Activated B cell treated with CpG ODN at 0.5 μM for 24 hours (primary cell): ENCODE measurements at regions of chr20 and their contacts with region 1.

Region 1: GRCh38 chr20:48864791-48865314 is 37.1 kb upstream of the PREX1 start:
- DNase-seq: no peak
- ATAC-seq: peak; percentile 14
- H3K4me3 Mint-ChIP-seq: peak overlapping the region; percentile 9
- H3K27ac Mint-ChIP-seq: no peak overlapping the region
- H3K4me1 Mint-ChIP-seq: peaks cover 45% of the 10 kb centered on the region
- H3K27me3 Mint-ChIP-seq: no peaks in the 10 kb centered on the region
- CTCF ChIP-seq: no peak

Region 2: DNA sequence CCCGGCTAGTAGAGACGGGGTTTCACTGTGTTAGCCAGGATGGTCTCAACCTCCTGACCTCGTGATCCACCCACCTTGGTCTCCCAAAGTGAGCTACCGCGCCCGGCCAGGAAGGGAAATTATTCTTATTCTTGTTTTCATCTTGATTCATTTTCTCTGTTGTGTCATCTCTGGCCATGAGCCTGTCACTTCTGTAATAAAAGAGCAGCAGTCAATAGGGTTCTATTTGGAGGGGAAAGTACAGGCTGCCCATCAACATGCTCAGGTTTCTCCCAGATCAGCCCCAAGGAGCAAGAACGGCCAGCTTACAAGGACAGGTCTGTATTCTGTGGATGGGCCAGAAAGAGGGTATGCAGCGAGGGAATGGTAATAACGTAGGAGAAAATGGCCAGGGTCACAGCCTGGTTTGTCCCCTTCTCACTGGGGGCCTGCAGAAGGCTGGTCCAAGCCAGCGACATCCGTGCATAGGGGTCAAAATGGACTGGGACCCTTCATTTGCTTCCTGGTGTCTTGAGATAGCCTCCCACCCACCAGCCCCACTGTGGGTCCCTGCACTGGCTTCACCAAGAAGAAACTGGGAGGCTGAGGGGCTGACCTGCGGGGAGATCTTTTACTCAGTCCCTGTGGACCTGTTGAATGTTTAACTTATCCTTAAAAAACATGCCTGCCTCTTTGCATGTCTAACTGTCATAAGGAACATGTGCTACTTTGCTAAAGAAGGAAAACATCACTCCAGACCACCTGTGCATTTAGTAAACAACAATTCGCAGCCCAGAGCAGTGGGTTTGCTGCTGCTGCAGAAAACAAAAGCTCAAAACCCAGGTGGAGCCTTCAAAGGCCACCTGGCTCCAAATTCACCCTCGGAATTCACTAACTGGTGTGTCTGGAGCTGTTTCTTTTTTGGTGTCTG is 381.8 kb before region 1 on chr20:
- CTCF ChIA-PET with region 1: no interaction called
- POLR2A ChIA-PET with region 1: no interaction called
- intact Hi-C with region 1: no loop called
- DNase-seq: no peak
- ATAC-seq: no peak
- H3K4me3 Mint-ChIP-seq: no peak overlapping the region
- H3K27ac Mint-ChIP-seq: no peak overlapping the region
- H3K4me1 Mint-ChIP-seq: peaks cover 2% of the 10 kb centered on the region
- H3K27me3 Mint-ChIP-seq: peaks cover 47% of the 10 kb centered on the region
- CTCF ChIP-seq: no peak

Region 3: GRCh38 chr20:48620519-48621254 is 244.2 kb before region 1 on chr20:
- CTCF ChIA-PET with region 1: no interaction called
- POLR2A ChIA-PET with region 1: no interaction called
- intact Hi-C with region 1: no loop called
- DNase-seq: peak; percentile 70
- ATAC-seq: peak; percentile 95
- H3K4me3 Mint-ChIP-seq: peak overlapping the region; percentile 50
- H3K27ac Mint-ChIP-seq: no peak overlapping the region
- H3K4me1 Mint-ChIP-seq: peaks cover 10% of the 10 kb centered on the region
- H3K27me3 Mint-ChIP-seq: no peaks in the 10 kb centered on the region
- CTCF ChIP-seq: peak; percentile 51

Region 4: GRCh38 chr20:48904365-48905296 is 39.8 kb after region 1 on chr20:
- CTCF ChIA-PET with region 1: no interaction called
- POLR2A ChIA-PET with region 1: no interaction called
- intact Hi-C with region 1: loop called (anchors 5 kb)
- DNase-seq: no peak
- ATAC-seq: peak; percentile 83
- H3K4me3 Mint-ChIP-seq: peak overlapping the region; percentile 45
- H3K27ac Mint-ChIP-seq: peak overlapping the region; percentile 30
- H3K4me1 Mint-ChIP-seq: peaks cover 10% of the 10 kb centered on the region
- H3K27me3 Mint-ChIP-seq: no peaks in the 10 kb centered on the region
- CTCF ChIP-seq: no peak

Region 5: DNA sequence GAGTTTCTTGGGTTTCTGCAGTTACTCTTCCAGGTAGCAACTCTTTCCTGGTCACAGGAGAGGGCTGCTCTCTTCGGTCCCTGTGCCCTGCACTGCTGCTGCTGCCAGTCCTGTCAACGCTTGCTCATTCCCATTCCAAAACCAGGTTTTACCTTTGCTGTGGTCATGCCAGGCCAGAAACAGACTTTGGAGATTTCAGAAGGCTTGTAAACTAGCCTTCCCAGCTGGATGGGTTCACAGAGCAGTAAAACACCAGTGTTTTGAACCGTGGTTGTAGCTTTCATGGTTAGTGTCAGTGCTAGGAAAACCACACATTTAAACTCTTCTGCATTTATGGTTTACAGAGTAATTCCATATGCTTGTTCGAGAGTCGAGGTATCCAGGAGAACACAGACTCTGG is 72.8 kb after region 1 on chr20:
- CTCF ChIA-PET with region 1: no interaction called
- POLR2A ChIA-PET with region 1: no interaction called
- intact Hi-C with region 1: no loop called
- DNase-seq: no peak
- ATAC-seq: no peak
- H3K4me3 Mint-ChIP-seq: no peak overlapping the region
- H3K27ac Mint-ChIP-seq: no peak overlapping the region
- H3K4me1 Mint-ChIP-seq: peaks cover 8% of the 10 kb centered on the region
- H3K27me3 Mint-ChIP-seq: no peaks in the 10 kb centered on the region
- CTCF ChIP-seq: no peak

Region 6: GRCh38 chr20:49207076-49207475 is 342.2 kb after region 1 on chr20:
- CTCF ChIA-PET with region 1: no interaction called
- POLR2A ChIA-PET with region 1: no interaction called
- intact Hi-C with region 1: no loop called
- DNase-seq: no peak
- ATAC-seq: no peak
- H3K4me3 Mint-ChIP-seq: no peak overlapping the region
- H3K27ac Mint-ChIP-seq: no peak overlapping the region
- H3K4me1 Mint-ChIP-seq: no peaks in the 10 kb centered on the region
- H3K27me3 Mint-ChIP-seq: no peaks in the 10 kb centered on the region
- CTCF ChIP-seq: no peak